BJ (cell line): ENCODE measurements at regions of chr11 and their contacts with region 1.

Region 1: GRCh38 chr11:12914400-12914912 is 94.7 kb upstream of the RASSF10 start:
- DNase-seq: no peak
- H3K4me3 ChIP-seq: no peak overlapping the region
- H3K27me3 ChIP-seq: no peaks in the 10 kb centered on the region
- CTCF ChIP-seq: peak; percentile 85

Region 2: DNA sequence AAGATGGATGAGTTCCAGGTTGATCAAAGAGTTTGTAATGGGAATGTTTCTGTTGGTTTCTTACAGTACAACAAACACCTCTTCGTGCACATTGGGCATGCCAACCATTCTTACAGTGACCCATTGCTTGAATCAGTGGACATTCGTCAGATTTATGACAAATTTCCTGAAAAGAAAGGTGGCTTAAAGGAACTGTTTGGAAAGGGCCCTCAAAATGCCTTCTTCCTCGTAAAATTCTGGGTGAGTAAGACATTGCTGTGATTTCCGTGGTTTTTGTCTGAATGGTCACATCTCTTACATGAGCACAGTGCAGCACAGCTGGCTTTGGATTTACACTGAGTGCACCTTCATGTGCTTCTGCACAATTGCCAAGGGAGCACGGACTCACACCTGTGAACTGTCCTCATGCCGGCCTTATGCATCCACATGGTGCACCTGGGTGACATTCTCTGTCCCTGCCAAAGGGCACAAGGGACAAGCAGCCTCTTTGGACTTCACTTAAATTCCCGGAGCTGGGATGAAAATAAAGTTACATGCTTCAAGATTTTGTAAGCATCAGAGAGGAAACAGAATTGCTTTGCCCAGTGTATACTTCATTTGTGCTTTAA is 12.5 kb before region 1 on chr11:
- CTCF ChIA-PET with region 1: interaction called, 28 read pairs
- POLR2A ChIA-PET with region 1: no interaction called
- DNase-seq: no peak
- H3K4me3 ChIP-seq: no peak overlapping the region
- H3K27me3 ChIP-seq: no peaks in the 10 kb centered on the region
- CTCF ChIP-seq: no peak

Region 3: DNA sequence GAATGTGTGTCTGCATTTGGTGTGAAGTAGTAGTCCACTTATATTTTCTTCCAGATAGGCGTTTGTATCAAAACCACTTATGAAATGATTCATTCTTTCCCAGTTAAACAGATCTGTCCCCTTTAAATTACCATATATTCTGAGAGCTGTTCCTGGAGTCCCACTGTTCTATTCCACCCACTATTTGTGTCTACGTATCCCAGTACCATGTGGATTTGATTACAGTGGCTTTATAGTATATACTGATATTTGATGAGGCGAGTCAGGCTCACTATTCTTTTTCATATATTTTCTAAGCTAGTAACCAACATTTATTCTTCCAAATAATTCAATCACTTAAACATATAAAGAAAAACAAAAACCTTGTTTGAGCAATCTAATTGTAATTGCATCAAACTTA is 12.8 kb after region 1 on chr11:
- CTCF ChIA-PET with region 1: interaction called, 14 read pairs
- POLR2A ChIA-PET with region 1: no interaction called
- DNase-seq: no peak
- H3K4me3 ChIP-seq: no peak overlapping the region
- H3K27me3 ChIP-seq: no peaks in the 10 kb centered on the region
- CTCF ChIP-seq: no peak